ENCODE measurements at regions of chr4 and their contacts with region 1.

Region 1: GRCh38 chr4:176065435-176066291 is at the start of gene WDR17:
- DNase-seq: peak; percentile 75
- ATAC-seq: peak; percentile 98
- H3K4me3 ChIP-seq: peak within 1 kb of the TSS; percentile 78
- H3K27ac ChIP-seq: no peak within 1 kb of the TSS
- H3K4me1 ChIP-seq: no peaks in the 10 kb centered on the region
- H3K27me3 ChIP-seq: no peaks in the 10 kb centered on the region
- CTCF ChIP-seq: no peak
- total RNA-seq, gene WDR17: 0.69 and 1.3 TPM in 2 replicates

Region 2: DNA sequence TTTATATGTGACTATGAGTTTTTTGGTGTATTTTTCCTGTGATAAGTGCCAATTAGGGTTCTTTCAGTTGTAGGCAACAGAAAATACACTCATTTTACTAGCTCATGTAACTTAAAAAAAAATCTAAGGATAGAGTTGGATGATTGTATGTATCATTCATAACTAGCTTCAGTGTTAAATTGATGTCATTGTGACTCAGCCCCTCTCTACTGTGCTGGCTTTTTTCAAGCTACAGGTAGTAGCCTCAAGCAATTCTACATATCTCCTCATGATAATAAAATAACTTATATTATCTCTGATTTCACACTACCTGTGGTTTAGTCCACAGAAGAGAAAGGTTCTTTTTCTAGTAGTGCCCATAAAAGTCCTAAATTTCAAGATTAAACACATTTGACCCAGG is 11.9 kb after region 1 on chr4:
- CTCF ChIA-PET with region 1: no interaction called
- POLR2A ChIA-PET with region 1: interaction called, 11 read pairs
- intact Hi-C with region 1: no loop called
- DNase-seq: peak; percentile 62
- ATAC-seq: peak; percentile 81
- H3K4me3 ChIP-seq: no peak overlapping the region
- H3K27ac ChIP-seq: no peak overlapping the region
- H3K4me1 ChIP-seq: peaks cover 6% of the 10 kb centered on the region; the same call in 1 of the 2 replicates
- H3K27me3 ChIP-seq: no peaks in the 10 kb centered on the region
- CTCF ChIP-seq: no peak